ENCODE measurements at regions of chr21 and their contacts with region 1.

Region 1: GRCh38 chr21:42449296-42449927 is 45.7 kb downstream of the UBASH3A start:
- DNase-seq: no peak
- H3K4me3 ChIP-seq: no peak overlapping the region
- H3K27ac ChIP-seq: no peak overlapping the region
- H3K4me1 ChIP-seq: peaks cover 0 to 13% of the 10 kb centered on the region in 2 donors
- H3K27me3 ChIP-seq: no peaks in the 10 kb centered on the region
- CTCF ChIP-seq: no peak
- POLR2A ChIP-seq: no peak

Region 2: DNA sequence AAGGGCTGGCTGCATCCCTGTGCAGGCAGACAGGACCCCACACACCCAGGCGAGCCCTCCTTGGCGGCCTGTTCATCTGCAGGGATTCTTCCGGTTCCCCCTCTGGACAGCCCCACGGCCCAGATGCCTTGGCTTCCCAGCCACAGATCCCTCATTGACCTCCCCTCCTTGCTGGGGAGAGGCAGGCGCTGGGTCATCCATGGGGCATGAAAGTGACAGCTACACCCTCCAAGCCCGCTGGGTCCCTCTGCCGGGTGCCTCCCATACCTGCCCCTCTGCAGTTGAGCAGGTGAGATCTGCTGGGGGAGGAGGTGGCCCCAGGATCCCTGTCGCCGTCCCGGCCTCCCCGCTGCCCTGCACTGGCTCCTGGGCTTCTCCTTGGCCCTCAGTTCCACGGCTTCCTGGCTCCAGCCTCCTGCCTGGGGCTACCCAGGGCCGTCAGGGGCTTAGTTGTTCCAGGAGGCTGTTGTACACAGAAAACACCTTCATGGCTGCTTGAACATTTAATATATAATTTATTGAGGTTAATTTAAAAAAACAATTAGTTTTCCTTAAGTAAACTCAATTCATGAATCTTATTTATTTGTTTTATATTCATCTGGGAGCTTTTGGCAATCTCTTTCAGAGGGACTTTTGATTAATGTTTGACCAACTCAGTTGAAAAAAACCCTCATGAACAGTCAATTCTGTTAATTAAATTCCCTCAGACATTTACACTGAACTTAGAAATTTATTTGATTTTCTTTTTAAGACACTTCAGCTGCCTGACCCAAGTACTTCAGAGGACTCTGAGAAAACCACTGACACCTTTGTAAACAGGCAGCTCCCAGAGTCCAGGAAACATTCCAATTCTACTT is 298.1 kb before region 1 on chr21:
- intact Hi-C with region 1: loop called (anchors 5 kb)
- DNase-seq: no peak
- H3K4me3 ChIP-seq: no peak overlapping the region
- H3K27ac ChIP-seq: peak overlapping the region in 1 of 3 donors; percentile 0
- H3K4me1 ChIP-seq: peaks cover 6 to 15% of the 10 kb centered on the region in 2 donors
- H3K27me3 ChIP-seq: no peaks in the 10 kb centered on the region
- CTCF ChIP-seq: no peak
- POLR2A ChIP-seq: no peak

Region 3: DNA sequence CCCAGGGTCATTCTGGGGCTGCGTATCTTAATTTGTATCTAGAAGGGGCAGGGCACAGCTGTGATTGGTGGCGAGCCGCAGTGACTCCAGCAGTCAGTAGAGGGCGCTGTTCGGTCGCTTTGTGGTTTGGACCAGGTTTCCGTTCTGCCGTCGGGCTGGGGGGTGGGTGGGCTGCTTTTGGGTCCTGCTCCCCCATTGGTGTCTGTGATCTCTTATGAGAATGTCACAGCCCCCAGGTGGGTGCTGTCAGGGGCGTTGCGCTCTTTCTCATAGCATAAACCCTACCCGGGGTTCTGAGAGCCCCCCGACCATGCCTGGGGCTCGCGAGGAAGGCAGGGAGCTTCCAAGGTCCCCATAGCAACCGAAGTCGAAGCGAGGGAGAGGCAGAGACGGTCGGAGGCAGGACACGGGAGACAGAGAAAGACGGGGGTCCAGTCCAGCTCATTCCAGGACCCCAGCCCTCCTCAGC is 139.6 kb before region 1 on chr21:
- intact Hi-C with region 1: loop called (anchors 5 kb)
- DNase-seq: peak; percentile 70 to 79
- H3K4me3 ChIP-seq: no peak overlapping the region
- H3K27ac ChIP-seq: peak overlapping the region; percentile 51 to 95 (median 71)
- H3K4me1 ChIP-seq: peaks cover 29 to 42% of the 10 kb centered on the region in 2 donors
- H3K27me3 ChIP-seq: no peaks in the 10 kb centered on the region
- CTCF ChIP-seq: peak; percentile 70 to 93 (median 81)
- POLR2A ChIP-seq: no peak

Region 4: GRCh38 chr21:42537106-42537742 is 87.8 kb after region 1 on chr21:
- intact Hi-C with region 1: no loop called
- DNase-seq: peak; percentile 73 to 74
- H3K4me3 ChIP-seq: no peak overlapping the region
- H3K27ac ChIP-seq: peak overlapping the region; percentile 57 to 72 (median 67)
- H3K4me1 ChIP-seq: peaks cover 33 to 46% of the 10 kb centered on the region in 2 donors
- H3K27me3 ChIP-seq: no peaks in the 10 kb centered on the region
- CTCF ChIP-seq: peak in 4 of 6 experiments; percentile 38 to 58 (median 46)
- POLR2A ChIP-seq: no peak

Measured in thyroid gland (tissue), 4 donors.